ENCODE measurements at regions of chr4 and their contacts with region 1.

Region 1: GRCh38 chr4:23161787-23162186 is 469.1 kb downstream of the GBA3 start:
- DNase-seq: no peak
- H3K4me3 ChIP-seq: no peak overlapping the region
- H3K27ac ChIP-seq: no peak overlapping the region
- H3K27me3 ChIP-seq: no peaks in the 10 kb centered on the region
- CTCF ChIP-seq: no peak

Region 2: GRCh38 chr4:23135792-23136645 is 25.8 kb before region 1 on chr4:
- CTCF ChIA-PET with region 1: interaction called, 10 read pairs
- POLR2A ChIA-PET with region 1: no interaction called
- DNase-seq: no peak
- H3K4me3 ChIP-seq: no peak overlapping the region
- H3K27ac ChIP-seq: no peak overlapping the region
- H3K27me3 ChIP-seq: no peaks in the 10 kb centered on the region
- CTCF ChIP-seq: peak; percentile 84

Region 3: DNA sequence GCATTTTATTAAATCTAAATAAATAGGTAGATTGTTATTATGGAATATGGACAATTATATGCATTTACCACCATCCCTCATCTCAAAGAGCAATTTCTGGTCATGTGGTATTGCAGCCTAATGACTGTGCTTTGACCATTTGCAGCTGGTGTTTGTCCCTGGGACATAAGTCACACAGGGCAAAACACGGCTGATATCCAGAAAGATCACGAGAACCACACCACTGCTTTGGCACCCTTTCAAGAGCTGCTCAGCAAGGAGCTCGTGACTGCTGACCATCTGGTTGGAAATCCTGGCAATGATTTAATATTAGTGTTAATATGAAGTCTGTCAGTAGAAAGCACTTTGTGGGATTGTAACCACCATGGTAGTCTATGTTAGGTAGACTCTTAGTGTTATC is 76.0 kb after region 1 on chr4:
- CTCF ChIA-PET with region 1: no interaction called
- POLR2A ChIA-PET with region 1: no interaction called
- DNase-seq: no peak
- H3K4me3 ChIP-seq: no peak overlapping the region
- H3K27ac ChIP-seq: no peak overlapping the region
- H3K27me3 ChIP-seq: no peaks in the 10 kb centered on the region
- CTCF ChIP-seq: no peak

Measured in AG04450 (cell line).